ENCODE measurements at regions of chr1 and their contacts with region 1.

Region 1: DNA sequence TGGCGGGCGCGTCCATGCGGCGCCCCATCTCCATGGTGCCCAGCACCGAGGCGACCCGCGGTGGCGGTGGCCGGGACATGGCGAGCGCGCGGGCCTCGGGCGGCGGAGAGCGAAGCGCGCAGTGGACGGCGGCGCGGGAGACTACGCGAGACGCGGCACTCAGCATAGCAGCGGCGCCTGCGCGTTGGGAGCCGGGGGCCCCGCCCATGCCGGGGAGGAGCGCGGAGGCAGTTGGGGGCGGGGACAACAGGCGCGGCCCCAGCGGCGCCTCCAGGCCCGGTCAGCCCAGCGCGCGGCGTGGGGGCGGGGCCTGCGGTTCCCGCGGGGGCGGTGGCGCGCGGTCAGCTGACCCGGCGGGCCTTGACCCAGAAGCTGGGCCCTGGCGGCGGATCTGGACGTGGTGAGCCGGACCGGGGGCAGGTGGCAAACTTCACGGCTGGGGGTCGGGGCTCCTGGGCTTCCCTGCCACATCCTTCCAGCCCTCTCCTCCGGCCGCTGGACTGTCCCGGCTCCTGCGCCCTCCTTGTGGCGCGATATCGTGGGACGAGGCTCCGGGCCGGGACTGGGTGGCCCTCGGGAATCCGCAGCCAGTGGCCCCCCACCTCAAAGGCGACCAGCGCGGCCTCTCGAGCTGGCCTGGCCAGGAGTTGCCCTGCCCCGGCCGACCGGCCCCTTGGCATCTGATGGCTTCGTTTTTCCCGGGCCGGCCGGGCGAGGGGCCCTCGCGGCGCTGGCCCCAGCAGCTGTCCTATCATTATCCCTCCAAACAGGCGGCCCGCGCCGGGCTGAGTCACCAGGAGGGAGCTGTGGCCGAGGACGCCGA is at the starts of genes AKR7A2 and SLC66A1:
- DNase-seq: peak; percentile 95
- H3K4me3 ChIP-seq: peak within 1 kb of the TSS; percentile 84 to 94 (median 88)
- H3K27ac ChIP-seq: peak within 1 kb of the TSS; percentile 85 to 94 (median 92)
- H3K4me1 ChIP-seq: peaks cover 0 to 36% (median 30%) of the 10 kb centered on the region in 4 donors
- H3K27me3 ChIP-seq: no peaks in the 10 kb centered on the region
- CTCF ChIP-seq: peak in 2 of 4 experiments; percentile 12 to 26
- EP300 ChIP-seq: no peak
- POLR2A ChIP-seq: peak in 1 of 2 donors; percentile 39
- total RNA-seq, gene AKR7A2: 55.8 to 110 (median 77.2) TPM
- total RNA-seq, gene SLC66A1: 7.5 to 15.2 (median 8.8) TPM

Region 2: DNA sequence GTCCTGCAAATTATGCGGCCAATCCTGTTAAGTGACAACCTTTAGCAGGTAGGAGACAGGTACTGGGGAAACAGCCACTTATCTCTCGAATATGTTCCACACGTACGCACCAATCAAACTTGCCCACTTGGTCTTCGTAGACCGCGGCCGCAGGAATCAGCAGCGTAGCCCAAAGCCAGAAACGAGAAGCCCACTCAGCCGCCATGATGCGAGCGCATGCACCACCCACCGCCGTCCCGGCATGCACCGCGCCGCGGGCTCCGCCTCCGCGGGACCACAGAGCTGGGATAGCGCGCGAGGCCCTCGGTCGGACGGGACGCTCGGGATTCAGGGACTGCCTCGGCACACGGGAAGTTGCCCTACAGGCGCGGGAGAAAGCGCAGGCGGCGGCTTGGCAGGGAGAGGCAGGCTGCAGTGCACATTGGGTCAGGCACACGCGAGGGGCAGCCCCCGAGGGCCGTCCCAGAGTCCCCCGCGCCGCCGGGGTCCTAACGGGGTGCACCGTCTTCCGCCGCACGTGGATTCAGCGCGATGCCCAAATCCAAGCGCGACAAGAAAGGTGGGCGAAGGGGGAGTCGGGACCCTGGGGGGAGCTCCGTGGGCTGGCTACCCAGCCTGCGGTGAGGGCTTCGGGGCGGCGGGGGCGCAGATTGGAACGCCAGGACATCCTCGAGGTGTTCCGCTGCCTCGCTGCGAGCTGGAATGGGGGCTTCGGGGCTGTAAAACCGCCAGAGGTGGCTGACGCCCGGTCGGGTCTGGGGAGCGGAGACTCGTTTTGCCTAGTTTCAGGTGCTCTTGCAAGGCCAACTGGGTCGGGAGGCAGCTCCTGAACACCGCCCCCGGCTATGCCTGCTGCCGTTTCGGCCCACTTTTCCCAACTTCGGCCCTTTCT is 60.6 kb before region 1 on chr1 and contains the starts of genes EMC1 and MRTO4:
- intact Hi-C with region 1: loop called (anchors 2 kb)
- DNase-seq: peak; percentile 85
- H3K4me3 ChIP-seq: peak within 1 kb of the TSS; percentile 76 to 91 (median 87)
- H3K27ac ChIP-seq: peak within 1 kb of the TSS; percentile 91 to 97 (median 92)
- H3K4me1 ChIP-seq: peaks cover 0 to 41% (median 35%) of the 10 kb centered on the region in 4 donors
- H3K27me3 ChIP-seq: no peaks in the 10 kb centered on the region
- CTCF ChIP-seq: no peak
- EP300 ChIP-seq: no peak
- POLR2A ChIP-seq: no peak
- total RNA-seq, gene EMC1: 19.6 to 46.5 (median 31.3) TPM
- total RNA-seq, gene MRTO4: 10.8 to 21.3 (median 15.3) TPM

Measured in sigmoid colon (tissue), 7 donors.